ENCODE measurements at regions of chr5 and their contacts with region 1.

Region 1: GRCh38 chr5:39177631-39177964 is 41.8 kb downstream of the FYB1 start:
- DNase-seq: peak in 5 of 14 experiments; percentile 30 to 82 (median 79)
- ATAC-seq: peak; percentile 64
- H3K4me3 ChIP-seq: peak overlapping the region; percentile 29
- H3K4me3 Mint-ChIP-seq: peak overlapping the region; percentile 61
- H3K27ac ChIP-seq: peak overlapping the region; percentile 58 to 85
- H3K27ac Mint-ChIP-seq: peak overlapping the region; percentile 96
- H3K4me1 ChIP-seq: peaks cover 57% of the 10 kb centered on the region
- H3K4me1 Mint-ChIP-seq: peaks cover 97% of the 10 kb centered on the region
- H3K27me3 ChIP-seq: no peaks in the 10 kb centered on the region
- H3K27me3 Mint-ChIP-seq: no peaks in the 10 kb centered on the region
- CTCF ChIP-seq: no peak

Region 2: DNA sequence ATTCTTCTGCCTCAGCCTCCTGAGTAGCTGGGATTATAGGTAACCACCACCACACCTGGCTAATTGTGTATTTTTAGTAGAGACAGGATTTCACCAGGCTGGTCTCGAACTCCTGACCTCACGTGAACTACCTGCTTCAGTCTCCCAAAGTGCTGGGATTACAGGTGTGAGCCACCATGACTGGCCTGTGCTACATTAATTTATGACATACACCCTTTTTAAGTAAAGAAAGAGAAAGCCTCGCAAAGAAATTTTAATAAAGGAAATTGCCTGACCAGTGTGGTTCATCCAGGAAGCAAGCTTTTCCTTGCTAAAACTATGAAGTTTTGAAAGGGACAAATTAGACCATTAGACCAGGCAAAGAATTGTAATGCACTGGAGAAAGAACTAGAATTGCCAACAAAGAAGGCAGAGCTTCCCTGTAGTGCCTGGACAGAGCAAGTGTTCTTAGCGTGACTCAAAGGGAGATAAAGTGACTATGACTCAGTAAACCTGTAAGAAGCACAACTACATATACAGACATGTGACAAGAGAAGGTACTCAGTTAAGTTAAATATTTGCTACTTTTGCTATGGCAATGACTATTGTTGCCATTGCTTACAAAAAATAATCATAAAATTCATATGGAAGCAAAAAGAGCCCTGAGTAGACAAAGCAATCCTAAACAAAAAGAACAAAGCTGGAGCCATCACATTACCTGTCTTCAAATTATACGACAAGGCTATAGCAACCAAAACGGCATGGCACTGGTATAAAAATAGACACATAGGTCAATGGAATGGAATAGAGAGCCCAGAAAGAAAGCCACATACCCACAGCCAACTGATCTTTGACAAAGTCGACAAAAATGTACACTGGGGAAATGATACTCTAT is 12.8 kb before region 1 on chr5:
- CTCF ChIA-PET with region 1: interaction called, 5 read pairs
- POLR2A ChIA-PET with region 1: interaction called, 141 read pairs
- intact Hi-C with region 1: loop called in 1 of 2 experiments (anchors 1 kb)
- DNase-seq: peak in 4 of 14 experiments; percentile 40 to 76 (median 60)
- ATAC-seq: peak; percentile 79
- H3K4me3 ChIP-seq: peak overlapping the region; percentile 13
- H3K4me3 Mint-ChIP-seq: peak overlapping the region; percentile 81
- H3K27ac ChIP-seq: peak overlapping the region; percentile 59 to 64
- H3K27ac Mint-ChIP-seq: peak overlapping the region; percentile 96
- H3K4me1 ChIP-seq: peaks cover 53% of the 10 kb centered on the region
- H3K4me1 Mint-ChIP-seq: peaks cover 96% of the 10 kb centered on the region
- H3K27me3 ChIP-seq: no peaks in the 10 kb centered on the region
- H3K27me3 Mint-ChIP-seq: no peaks in the 10 kb centered on the region
- CTCF ChIP-seq: no peak

Region 3: GRCh38 chr5:39194466-39195136 is 17.0 kb after region 1 on chr5:
- CTCF ChIA-PET with region 1: interaction called, 27 read pairs
- POLR2A ChIA-PET with region 1: interaction called, 408 read pairs
- intact Hi-C with region 1: loop called (anchors 2 kb)
- DNase-seq: peak in 1 of 14 experiments; percentile 52
- ATAC-seq: no peak
- H3K4me3 ChIP-seq: peak overlapping the region; percentile 76
- H3K4me3 Mint-ChIP-seq: peak overlapping the region; percentile 85
- H3K27ac ChIP-seq: peak overlapping the region; percentile 79 to 83
- H3K27ac Mint-ChIP-seq: peak overlapping the region; percentile 96
- H3K4me1 ChIP-seq: peaks cover 50% of the 10 kb centered on the region
- H3K4me1 Mint-ChIP-seq: peaks cover 77% of the 10 kb centered on the region
- H3K27me3 ChIP-seq: no peaks in the 10 kb centered on the region
- H3K27me3 Mint-ChIP-seq: no peaks in the 10 kb centered on the region
- CTCF ChIP-seq: no peak

Region 4: GRCh38 chr5:39209924-39210323 is 32.3 kb after region 1 on chr5:
- CTCF ChIA-PET with region 1: interaction called, 5 read pairs
- POLR2A ChIA-PET with region 1: interaction called, 120 read pairs
- intact Hi-C with region 1: loop called (anchors 1 to 5 kb)
- DNase-seq: peak; percentile 64 to 93 (median 80)
- ATAC-seq: peak; percentile 76
- H3K4me3 ChIP-seq: peak overlapping the region; percentile 42
- H3K4me3 Mint-ChIP-seq: peak overlapping the region; percentile 77
- H3K27ac ChIP-seq: peak overlapping the region; percentile 82
- H3K27ac Mint-ChIP-seq: peak overlapping the region; percentile 96
- H3K4me1 ChIP-seq: peaks cover 69% of the 10 kb centered on the region
- H3K4me1 Mint-ChIP-seq: peaks cover 98% of the 10 kb centered on the region
- H3K27me3 ChIP-seq: no peaks in the 10 kb centered on the region
- H3K27me3 Mint-ChIP-seq: no peaks in the 10 kb centered on the region
- CTCF ChIP-seq: no peak

Region 5: DNA sequence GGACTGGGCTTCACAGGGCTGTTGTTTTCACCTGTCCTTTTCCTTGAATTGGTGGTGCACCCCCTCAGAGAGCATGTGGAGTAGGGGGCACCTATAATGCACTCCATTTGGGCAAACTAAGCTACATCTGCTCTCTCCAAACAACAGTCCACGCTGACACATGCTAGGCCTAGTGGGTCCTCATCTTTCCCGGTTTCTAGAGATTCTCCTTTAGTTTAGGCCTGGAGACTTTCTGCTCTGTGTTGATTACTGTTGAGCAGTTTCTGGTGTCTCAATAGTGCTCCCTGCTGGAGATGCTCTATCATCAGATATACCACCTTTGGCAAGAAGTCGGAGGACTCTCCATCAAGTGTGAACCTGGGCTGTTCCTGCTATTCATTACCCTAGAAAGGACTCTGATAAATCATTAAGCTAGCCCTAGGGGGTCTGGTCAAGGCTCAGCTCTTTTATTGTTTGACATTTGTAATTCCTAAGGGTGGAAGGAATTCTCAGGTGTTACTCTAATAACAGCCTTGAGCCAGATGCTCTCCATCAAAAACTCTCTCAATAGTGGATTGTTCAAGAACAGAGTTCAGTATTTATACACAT is 105.7 kb after region 1 on chr5:
- CTCF ChIA-PET with region 1: interaction called, 10 read pairs
- POLR2A ChIA-PET with region 1: interaction called, 5 read pairs
- intact Hi-C with region 1: no loop called
- DNase-seq: peak; percentile 5 to 90 (median 50)
- ATAC-seq: peak; percentile 100
- H3K4me3 ChIP-seq: no peak overlapping the region
- H3K4me3 Mint-ChIP-seq: peak overlapping the region; percentile 17
- H3K27ac ChIP-seq: no peak overlapping the region
- H3K27ac Mint-ChIP-seq: peak overlapping the region; percentile 67
- H3K4me1 ChIP-seq: peaks cover 9% of the 10 kb centered on the region
- H3K4me1 Mint-ChIP-seq: peaks cover 41% of the 10 kb centered on the region
- H3K27me3 ChIP-seq: no peaks in the 10 kb centered on the region
- H3K27me3 Mint-ChIP-seq: peaks cover 9% of the 10 kb centered on the region
- CTCF ChIP-seq: peak; percentile 81

Measured in CD4-positive, alpha-beta T cell (primary cell).